GM23248 (cell line): ENCODE measurements at regions of chr3 and their contacts with region 1.

Region 1: GRCh38 chr3:178325330-178325729 is 210.9 kb upstream of the KCNMB2 start:
- DNase-seq: peak; percentile 59
- H3K4me3 ChIP-seq: no peak overlapping the region
- H3K27ac ChIP-seq: no peak overlapping the region
- H3K4me1 ChIP-seq: peaks cover 8% of the 10 kb centered on the region
- H3K27me3 ChIP-seq: no peaks in the 10 kb centered on the region

Region 2: GRCh38 chr3:177050501-177051237 is 1274.7 kb before region 1 on chr3:
- in situ Hi-C with region 1: loop called (anchors 25 kb)
- DNase-seq: peak; percentile 72
- H3K4me3 ChIP-seq: no peak overlapping the region
- H3K27ac ChIP-seq: no peak overlapping the region
- H3K4me1 ChIP-seq: peaks cover 13% of the 10 kb centered on the region
- H3K27me3 ChIP-seq: no peaks in the 10 kb centered on the region

Region 3: GRCh38 chr3:177816667-177817208 is 508.6 kb before region 1 on chr3:
- in situ Hi-C with region 1: loop called (anchors 10 kb)
- DNase-seq: peak; percentile 55
- H3K4me3 ChIP-seq: no peak overlapping the region
- H3K27ac ChIP-seq: no peak overlapping the region
- H3K4me1 ChIP-seq: peaks cover 12% of the 10 kb centered on the region
- H3K27me3 ChIP-seq: 0 out of 2 replicates have a peak, but pooled peaks cover 10% of the 10 kb centered on the region